Psoas muscle (tissue), 8 donors: ENCODE measurements at regions of chr4 and their contacts with region 1.

Region 1: GRCh38 chr4:3363411-3364141 is 70.8 kb downstream of the RGS12 start:
- DNase-seq: no peak
- ATAC-seq: no peak
- H3K4me3 ChIP-seq: no peak overlapping the region
- H3K27ac ChIP-seq: no peak overlapping the region
- H3K4me1 ChIP-seq: peaks cover 6% of the 10 kb centered on the region
- H3K27me3 ChIP-seq: no peaks in the 10 kb centered on the region
- CTCF ChIP-seq: no peak

Region 2: GRCh38 chr4:3399277-3400194 is 36.0 kb after region 1 on chr4:
- intact Hi-C with region 1: loop called in 1 of 2 experiments (anchors 5 kb)
- DNase-seq: no peak
- ATAC-seq: peak; percentile 85 to 95 (median 93)
- H3K4me3 ChIP-seq: no peak overlapping the region
- H3K27ac ChIP-seq: no peak overlapping the region
- H3K4me1 ChIP-seq: peaks cover 6% of the 10 kb centered on the region
- H3K27me3 ChIP-seq: no peaks in the 10 kb centered on the region
- CTCF ChIP-seq: peak; percentile 26